Activated T-helper 1 cell treated with anti-CD3 and anti-CD28 coated beads, Interleukin-12 subunit alpha, Interleukin-12 subunit beta, Interleukin-2, Interleukin-4 antibody, amounts not matched to agents 30 ng/mL and 10 ng/mL and 1 ng/mL, durations not matched to agents 14 hours and 24 hours and 36 hours (primary cell): ENCODE measurements at regions of chr14 and their contacts with region 1.

Region 1: GRCh38 chr14:61025251-61026223 is 44.5 kb downstream of the SLC38A6 start:
- DNase-seq: peak; percentile 45
- H3K4me3 Mint-ChIP-seq: no peak overlapping the region
- H3K27ac Mint-ChIP-seq: no peak overlapping the region
- H3K4me1 Mint-ChIP-seq: no peaks in the 10 kb centered on the region
- H3K27me3 Mint-ChIP-seq: no peaks in the 10 kb centered on the region

Region 2: DNA sequence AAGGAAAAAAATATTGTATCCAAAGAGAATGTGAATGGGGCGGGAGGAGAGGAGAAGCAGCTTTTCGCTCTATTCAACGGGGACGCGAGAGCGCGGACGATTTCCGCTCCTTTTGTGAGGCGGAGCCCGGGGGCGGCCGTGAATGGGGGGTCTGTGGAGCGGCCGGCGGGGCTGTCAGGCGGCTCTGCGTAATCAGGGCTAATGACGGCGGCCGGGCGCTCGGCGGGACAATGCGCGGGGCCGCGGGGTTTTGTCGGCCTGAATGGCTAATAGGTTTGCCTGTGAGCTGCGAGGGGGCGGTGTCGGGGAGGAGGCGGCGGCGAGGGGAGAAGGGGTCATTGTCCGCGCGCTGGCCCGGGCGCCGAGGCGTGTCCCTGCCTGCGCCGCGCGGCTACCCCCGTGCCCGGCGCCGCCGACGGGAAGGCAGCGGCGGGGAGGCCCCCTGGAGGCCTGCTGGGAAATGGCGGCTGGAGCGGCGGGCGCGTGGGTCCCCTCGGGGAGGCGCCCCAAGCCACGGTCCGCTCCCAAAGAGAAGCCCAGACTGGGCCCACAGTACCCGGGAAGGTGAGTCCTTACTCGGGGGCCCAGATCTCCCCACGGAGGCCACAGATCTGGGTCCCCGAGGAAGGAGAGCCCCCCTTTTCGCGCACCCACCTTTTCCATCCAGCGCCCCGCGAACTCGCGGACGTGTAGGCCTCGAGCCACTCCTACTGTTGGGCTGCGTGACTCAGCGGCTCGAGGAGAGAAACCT is 510.6 kb before region 1 on chr14:
- intact Hi-C with region 1: loop called (anchors 10 kb)
- DNase-seq: no peak
- H3K4me3 Mint-ChIP-seq: no peak overlapping the region
- H3K27ac Mint-ChIP-seq: no peak overlapping the region
- H3K4me1 Mint-ChIP-seq: peaks cover 8% of the 10 kb centered on the region
- H3K27me3 Mint-ChIP-seq: peaks cover 64% of the 10 kb centered on the region

Region 3: GRCh38 chr14:60656686-60657455 is 368.7 kb before region 1 on chr14:
- intact Hi-C with region 1: loop called (anchors 1 kb)
- DNase-seq: peak; percentile 24
- H3K4me3 Mint-ChIP-seq: peak overlapping the region; percentile 82
- H3K27ac Mint-ChIP-seq: no peak overlapping the region
- H3K4me1 Mint-ChIP-seq: peaks cover 48% of the 10 kb centered on the region
- H3K27me3 Mint-ChIP-seq: peaks cover 79% of the 10 kb centered on the region

Region 4: GRCh38 chr14:60980811-60981632 is 44.5 kb before region 1 on chr14 and contains the starts of genes SLC38A6 and TRMT5:
- intact Hi-C with region 1: loop called (anchors 1 kb)
- DNase-seq: peak; percentile 88
- H3K4me3 Mint-ChIP-seq: no peak within 1 kb of the TSS
- H3K27ac Mint-ChIP-seq: no peak within 1 kb of the TSS
- H3K4me1 Mint-ChIP-seq: peaks cover 17% of the 10 kb centered on the region
- H3K27me3 Mint-ChIP-seq: no peaks in the 10 kb centered on the region
- total RNA-seq, gene SLC38A6: 4.5 and 4.7 TPM in 2 replicates
- total RNA-seq, gene TRMT5: 17.4 and 19.2 TPM in 2 replicates

Region 5: DNA sequence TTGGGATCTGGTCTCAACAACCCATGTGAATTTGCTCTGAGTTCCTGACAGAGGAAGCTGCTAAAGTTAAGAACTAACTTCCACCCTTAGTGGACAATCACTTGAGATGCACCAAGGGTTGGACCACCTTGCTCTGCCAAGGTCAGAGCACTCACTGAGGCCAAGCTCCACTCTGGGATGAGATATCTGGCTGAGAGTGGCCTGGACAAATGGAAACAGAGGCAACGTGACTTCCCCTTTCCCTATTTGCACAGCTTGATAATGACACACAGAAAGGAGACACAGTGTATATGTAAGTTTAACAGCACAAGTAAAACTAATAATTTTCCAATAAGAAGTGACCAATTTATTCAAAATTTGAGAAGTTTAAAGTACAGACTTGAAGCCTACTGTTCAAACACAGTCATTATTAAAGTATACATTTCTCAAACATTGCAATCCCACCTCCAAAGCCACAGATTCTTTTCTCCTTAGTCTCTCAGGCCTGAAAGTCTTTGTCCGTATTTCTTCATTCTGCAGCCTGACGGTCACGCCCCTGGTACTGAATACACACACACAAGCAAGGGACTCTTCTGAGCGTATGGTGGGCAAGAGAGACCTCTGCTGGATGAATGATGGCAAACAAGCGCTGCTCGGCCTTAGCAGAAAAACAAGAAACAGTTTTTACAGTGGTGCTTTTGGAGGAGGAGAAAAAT is 227.0 kb after region 1 on chr14:
- intact Hi-C with region 1: loop called (anchors 1 kb)
- DNase-seq: peak; percentile 49
- H3K4me3 Mint-ChIP-seq: no peak overlapping the region
- H3K27ac Mint-ChIP-seq: no peak overlapping the region
- H3K4me1 Mint-ChIP-seq: peaks cover 24% of the 10 kb centered on the region
- H3K27me3 Mint-ChIP-seq: peaks cover 24% of the 10 kb centered on the region